Left ventricle myocardium inferior (tissue), 1 donor: ENCODE measurements at regions of chr10 and their contacts with region 1.

Region 1: GRCh38 chr10:87861953-87862678 is 1.2 kb downstream of the KLLN start:
- DNase-seq: peak; percentile 96
- H3K4me3 ChIP-seq: peak overlapping the region; percentile 86
- H3K27ac ChIP-seq: peak overlapping the region; percentile 100
- H3K4me1 ChIP-seq: peaks cover 60% of the 10 kb centered on the region
- H3K27me3 ChIP-seq: no peaks in the 10 kb centered on the region
- CTCF ChIP-seq: no peak

Region 2: GRCh38 chr10:87915989-87916388 is 53.9 kb after region 1 on chr10:
- intact Hi-C with region 1: no loop called
- DNase-seq: no peak
- H3K4me3 ChIP-seq: no peak overlapping the region
- H3K27ac ChIP-seq: peak overlapping the region; percentile 51
- H3K4me1 ChIP-seq: peaks cover 53% of the 10 kb centered on the region
- H3K27me3 ChIP-seq: no peaks in the 10 kb centered on the region
- CTCF ChIP-seq: no peak

Region 3: DNA sequence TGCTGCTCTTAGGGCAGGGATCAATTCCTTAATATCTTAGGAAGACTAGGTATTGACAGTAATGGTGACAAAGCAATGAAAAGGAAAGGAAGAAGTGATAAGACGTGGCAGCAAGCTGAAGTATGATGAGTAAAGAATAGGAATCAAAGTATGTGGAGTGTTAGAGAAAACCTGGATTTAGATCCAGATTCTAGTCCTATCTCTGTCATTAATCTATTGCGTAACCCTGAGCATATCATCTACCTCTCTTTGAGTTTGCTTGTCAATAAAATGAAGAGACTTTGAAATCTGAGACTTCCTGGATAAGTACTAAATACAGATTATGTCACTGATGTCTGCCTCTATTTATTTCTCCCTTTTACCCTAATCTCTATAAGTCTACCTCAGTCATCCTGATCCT is 90.5 kb after region 1 on chr10:
- intact Hi-C with region 1: loop called (anchors 10 kb)
- DNase-seq: no peak
- H3K4me3 ChIP-seq: no peak overlapping the region
- H3K27ac ChIP-seq: no peak overlapping the region
- H3K4me1 ChIP-seq: peaks cover 23% of the 10 kb centered on the region
- H3K27me3 ChIP-seq: no peaks in the 10 kb centered on the region
- CTCF ChIP-seq: no peak

Region 4: GRCh38 chr10:88042160-88043100 is 180.3 kb after region 1 on chr10:
- intact Hi-C with region 1: no loop called
- DNase-seq: no peak
- H3K4me3 ChIP-seq: peak overlapping the region; percentile 25
- H3K27ac ChIP-seq: peak overlapping the region; percentile 64
- H3K4me1 ChIP-seq: peaks cover 33% of the 10 kb centered on the region
- H3K27me3 ChIP-seq: no peaks in the 10 kb centered on the region
- CTCF ChIP-seq: no peak

Region 5: DNA sequence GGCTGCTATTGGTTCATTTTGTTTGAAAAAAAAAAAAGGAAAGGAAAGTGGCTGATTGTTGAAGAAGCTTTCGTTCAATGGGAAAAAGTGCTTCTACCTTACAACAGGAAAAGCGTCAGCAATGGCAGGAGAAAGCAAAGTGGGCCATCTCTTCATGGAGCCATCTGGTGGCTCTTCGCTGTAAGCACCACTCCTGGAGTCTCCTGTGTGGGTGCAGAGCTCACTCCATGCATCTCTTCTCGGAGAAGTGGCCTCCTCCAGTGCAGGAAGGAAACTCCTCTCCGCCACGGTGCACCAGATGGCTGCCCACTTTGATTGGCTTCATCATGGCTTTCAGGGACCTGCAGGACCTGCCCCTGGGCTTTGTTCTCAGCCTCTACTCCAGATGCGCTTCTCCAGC is 252.3 kb after region 1 on chr10:
- intact Hi-C with region 1: loop called (anchors 10 kb)
- DNase-seq: peak; percentile 24
- H3K4me3 ChIP-seq: no peak overlapping the region
- H3K27ac ChIP-seq: no peak overlapping the region
- H3K4me1 ChIP-seq: peaks cover 7% of the 10 kb centered on the region
- H3K27me3 ChIP-seq: no peaks in the 10 kb centered on the region
- CTCF ChIP-seq: peak; percentile 79

Region 6: GRCh38 chr10:88254091-88254490 is 392.0 kb after region 1 on chr10:
- intact Hi-C with region 1: loop called (anchors 10 kb)
- DNase-seq: no peak
- H3K4me3 ChIP-seq: no peak overlapping the region
- H3K27ac ChIP-seq: peak overlapping the region; percentile 88
- H3K4me1 ChIP-seq: peaks cover 26% of the 10 kb centered on the region
- H3K27me3 ChIP-seq: no peaks in the 10 kb centered on the region
- CTCF ChIP-seq: no peak